ENCODE measurements at regions of chr3 and their contacts with region 1.

Region 1: DNA sequence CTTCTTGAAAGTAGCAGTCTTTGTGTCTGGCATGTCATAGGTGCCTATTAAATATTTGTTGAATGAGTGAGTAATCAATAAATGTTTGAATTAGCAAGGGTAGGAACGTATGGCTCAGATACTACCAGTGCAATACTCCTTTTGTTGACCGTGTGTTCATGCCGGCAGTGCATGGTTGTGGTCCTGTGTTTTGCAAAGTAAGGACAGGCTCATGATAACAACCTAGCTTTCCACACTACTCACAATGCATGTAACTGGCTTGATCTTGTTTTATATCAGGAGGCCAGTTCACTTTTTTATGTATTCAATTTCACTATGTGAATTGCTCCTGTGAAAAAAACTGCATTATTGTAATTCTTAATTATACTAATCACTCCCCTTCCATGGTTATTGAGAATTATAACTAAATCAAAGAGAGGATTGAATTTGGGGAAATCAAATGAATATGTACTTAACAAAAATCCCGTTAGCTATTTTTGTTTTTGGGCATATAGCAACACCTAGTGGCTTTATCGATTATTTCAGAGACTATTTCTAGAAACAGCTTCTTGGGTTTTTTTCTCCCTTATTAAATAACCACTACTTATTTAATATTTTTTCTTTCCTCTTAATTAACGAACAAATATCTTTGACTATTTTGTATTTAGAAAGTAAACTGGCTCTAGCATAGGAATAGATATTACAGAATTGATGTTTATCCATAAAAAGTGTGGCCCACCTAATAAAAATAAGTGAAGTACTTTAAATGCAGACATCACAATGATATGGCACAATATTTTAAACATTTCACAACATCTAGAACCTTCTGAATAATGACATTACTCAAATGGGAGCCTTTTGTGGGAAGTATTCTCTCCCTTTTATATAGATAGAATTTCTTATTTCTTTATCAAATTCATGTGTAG is 218.5 kb downstream of the BBX start:
- DNase-seq: no peak
- ATAC-seq: no peak

Region 2: GRCh38 chr3:107235928-107236315 is 505.3 kb before region 1 on chr3:
- intact Hi-C with region 1: no loop called
- DNase-seq: no peak
- ATAC-seq: peak; percentile 71 to 75

Region 3: GRCh38 chr3:107660306-107660976 is 80.8 kb before region 1 on chr3:
- intact Hi-C with region 1: no loop called
- DNase-seq: no peak
- ATAC-seq: no peak

Region 4: DNA sequence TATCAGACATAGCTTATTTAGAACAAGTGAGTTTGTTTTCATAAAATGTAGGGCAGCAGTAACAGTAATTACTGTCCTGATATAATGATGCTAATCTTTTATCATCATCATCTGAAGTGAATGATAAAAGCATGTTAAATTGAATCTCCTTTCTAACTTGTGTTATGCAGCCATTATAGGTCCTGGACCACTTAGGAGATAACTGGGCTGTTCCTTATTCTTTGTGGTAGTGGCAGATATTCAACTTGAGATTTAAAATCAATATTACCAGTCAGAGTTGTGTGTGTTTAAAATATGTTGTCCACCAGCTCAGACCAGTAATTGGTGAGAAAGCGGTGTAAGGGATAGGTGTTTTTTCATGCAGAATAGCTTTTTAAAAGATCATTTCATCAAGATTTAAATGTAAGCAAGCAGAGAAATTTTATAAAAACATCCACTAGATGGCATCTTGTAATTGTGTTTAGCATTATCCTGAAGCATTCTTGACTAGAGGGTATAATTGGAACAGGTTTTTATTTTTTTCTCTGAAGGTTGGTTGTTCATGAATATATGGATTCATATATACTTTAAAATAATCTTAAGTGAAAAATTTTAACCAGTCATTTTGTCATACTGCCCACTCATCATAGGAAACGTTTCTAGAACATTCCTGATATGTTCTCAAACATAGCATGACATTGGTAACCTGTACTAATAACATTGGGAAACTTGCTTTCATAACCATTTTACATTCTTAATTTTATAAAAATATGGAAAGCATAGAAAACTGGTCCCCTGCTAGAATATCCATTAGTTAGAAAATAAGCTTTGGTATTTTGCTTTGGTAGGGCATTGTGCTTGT is 64.6 kb before region 1 on chr3:
- intact Hi-C with region 1: loop called (anchors 5 to 10 kb)
- DNase-seq: no peak
- ATAC-seq: peak in 1 of 2 donors; percentile 32